H1 (cell line): ENCODE measurements at regions of chr4 and their contacts with region 1.

Region 1: DNA sequence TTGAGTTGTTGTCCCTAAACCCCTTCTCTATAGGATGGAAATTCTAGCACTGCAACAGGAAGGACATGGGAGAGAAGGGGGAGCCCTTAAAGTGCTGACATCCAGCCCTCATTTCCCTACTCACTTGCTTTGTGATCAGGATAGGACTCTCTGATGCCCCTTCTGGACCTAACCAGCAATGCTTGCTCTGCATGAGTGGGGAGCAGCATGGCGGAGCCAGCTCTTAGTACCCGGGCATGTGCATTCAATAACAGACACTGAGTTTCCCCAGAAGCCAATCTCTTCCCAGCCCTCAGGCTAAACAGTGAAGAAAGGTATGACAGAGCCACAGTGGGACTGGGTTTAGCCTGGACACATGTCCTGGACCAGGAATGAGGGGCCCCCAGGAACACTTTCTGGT is 14.0 kb downstream of the SOD3 start:
- DNase-seq: peak in 1 of 2 experiments; percentile 53
- H3K4me3 ChIP-seq: no peak overlapping the region
- H3K27ac ChIP-seq: no peak overlapping the region
- H3K4me1 ChIP-seq: peaks cover 2 to 12% (median 6%) of the 10 kb centered on the region in 4 experiments; a peak in 4 of 7 replicates
- H3K27me3 ChIP-seq: no peaks in the 10 kb centered on the region
- CTCF ChIP-seq: peak; percentile 58 to 75 (median 60)
- EP300 ChIP-seq: no peak
- POLR2A ChIP-seq: no peak
- RAD21 ChIP-seq: peak; percentile 55 to 63

Region 2: DNA sequence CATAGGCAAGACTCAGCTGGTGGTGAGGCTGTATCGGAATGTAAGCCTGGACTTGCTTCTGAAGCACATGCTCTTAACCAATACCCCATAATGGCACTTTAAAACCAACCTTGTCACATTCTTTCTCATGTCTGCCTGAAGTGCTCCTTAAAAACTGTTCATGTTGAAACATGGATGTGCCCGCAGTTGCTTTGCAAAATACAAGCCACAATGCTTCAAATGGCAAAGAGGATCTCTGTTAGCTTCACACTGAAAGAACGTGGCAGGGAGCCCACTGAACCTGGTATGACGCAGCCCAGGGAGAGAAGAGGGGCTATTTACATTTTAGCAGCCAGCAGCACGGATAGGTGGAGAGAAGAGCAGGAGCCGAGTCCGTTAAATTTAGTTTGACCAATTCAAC is 15.3 kb after region 1 on chr4:
- CTCF ChIA-PET with region 1: interaction called, 15 read pairs
- POLR2A ChIA-PET with region 1: no interaction called
- DNase-seq: no peak
- H3K4me3 ChIP-seq: no peak overlapping the region
- H3K27ac ChIP-seq: no peak overlapping the region
- H3K4me1 ChIP-seq: no peaks in the 10 kb centered on the region
- H3K27me3 ChIP-seq: no peaks in the 10 kb centered on the region
- CTCF ChIP-seq: no peak
- EP300 ChIP-seq: no peak
- POLR2A ChIP-seq: no peak
- RAD21 ChIP-seq: no peak

Region 3: GRCh38 chr4:24867766-24868296 is 58.5 kb after region 1 on chr4:
- CTCF ChIA-PET with region 1: interaction called, 11 read pairs
- POLR2A ChIA-PET with region 1: no interaction called
- DNase-seq: no peak
- H3K4me3 ChIP-seq: peak overlapping the region in 1 of 4 experiments; percentile 11; a peak in 1 of 8 replicates
- H3K27ac ChIP-seq: peak overlapping the region; percentile 42; the same call in 1 of the 2 replicates
- H3K4me1 ChIP-seq: peaks cover 7 to 18% (median 12%) of the 10 kb centered on the region in 4 experiments; a peak in 6 of 7 replicates
- H3K27me3 ChIP-seq: no peaks in the 10 kb centered on the region; a peak in 1 of 7 replicates
- CTCF ChIP-seq: no peak
- EP300 ChIP-seq: no peak; a peak in 1 of 3 replicates
- POLR2A ChIP-seq: no peak
- RAD21 ChIP-seq: no peak

Region 4: GRCh38 chr4:25113915-25114904 is 304.8 kb after region 1 on chr4:
- CTCF ChIA-PET with region 1: no interaction called
- POLR2A ChIA-PET with region 1: no interaction called
- DNase-seq: no peak
- H3K4me3 ChIP-seq: no peak overlapping the region
- H3K27ac ChIP-seq: no peak overlapping the region
- H3K4me1 ChIP-seq: no peaks in the 10 kb centered on the region
- H3K27me3 ChIP-seq: no peaks in the 10 kb centered on the region
- CTCF ChIP-seq: no peak
- EP300 ChIP-seq: no peak
- POLR2A ChIP-seq: no peak
- RAD21 ChIP-seq: no peak